Activated naive CD8-positive, alpha-beta T cell treated with anti-CD3 and anti-CD28 coated beads, Interleukin-2, amount 10 ng/mL, durations not matched to agents 7 days and 5 days (primary cell): ENCODE measurements at regions of chr5 and their contacts with region 1.

Region 1: DNA sequence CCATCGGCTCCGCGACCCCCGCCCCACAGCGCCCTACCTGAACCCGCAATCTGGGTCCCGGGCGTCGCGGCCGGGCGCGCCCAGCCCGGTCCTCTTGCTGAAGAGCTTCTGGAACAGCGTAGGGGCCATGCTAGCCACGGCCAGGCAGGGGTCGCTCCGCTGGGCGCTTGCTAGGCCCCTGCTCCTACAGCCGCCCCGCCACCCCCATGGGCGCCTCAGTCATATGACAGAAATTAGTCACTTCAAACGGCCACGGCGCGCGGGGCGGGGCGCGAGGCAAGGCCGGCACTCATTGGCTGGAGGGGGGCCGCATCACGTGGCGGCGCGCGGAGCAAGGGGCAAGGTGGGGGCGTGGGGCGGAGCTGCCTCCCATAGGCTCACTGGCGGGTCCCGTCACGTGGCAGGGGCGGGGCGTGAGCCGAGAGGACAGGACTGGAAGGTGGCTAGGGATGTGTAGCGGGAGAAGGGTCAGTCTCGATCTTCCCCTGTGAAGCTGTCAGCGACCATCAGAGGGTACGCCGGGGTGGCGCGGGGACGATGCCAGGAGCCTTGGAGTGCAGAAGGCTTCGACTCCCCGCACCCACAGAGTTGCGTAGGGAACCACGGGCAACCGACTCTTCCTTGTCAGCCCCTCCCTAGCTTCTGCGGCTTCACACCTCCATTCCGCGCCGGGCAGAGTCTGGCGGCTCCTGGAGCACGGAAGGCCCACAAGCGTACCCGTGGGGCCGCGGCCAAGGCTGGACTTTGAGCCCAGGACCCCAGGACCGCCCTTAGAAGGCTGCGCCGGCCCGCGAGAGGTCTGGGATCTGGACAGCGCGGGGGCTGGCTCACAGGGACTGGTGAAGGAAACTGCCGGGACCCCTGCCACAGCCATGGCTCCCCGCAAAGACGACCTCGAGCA is at the start of gene FNIP1:
- DNase-seq: peak; percentile 99
- ATAC-seq: peak; percentile 94
- H3K4me3 Mint-ChIP-seq: peak within 1 kb of the TSS; percentile 97
- H3K27ac Mint-ChIP-seq: peak within 1 kb of the TSS; percentile 94
- H3K4me1 Mint-ChIP-seq: peaks cover 25% of the 10 kb centered on the region
- H3K27me3 Mint-ChIP-seq: no peaks in the 10 kb centered on the region
- total RNA-seq, gene FNIP1: 30.6 to 31.7 TPM

Region 2: GRCh38 chr5:131634996-131635754 is 161.9 kb before region 1 on chr5 and contains the start of gene RAPGEF6:
- POLR2A ChIA-PET with region 1: interaction called, 14 read pairs
- DNase-seq: peak; percentile 92
- ATAC-seq: peak; percentile 91
- H3K4me3 Mint-ChIP-seq: peak within 1 kb of the TSS; percentile 96
- H3K27ac Mint-ChIP-seq: peak within 1 kb of the TSS; percentile 94
- H3K4me1 Mint-ChIP-seq: peaks cover 18% of the 10 kb centered on the region
- H3K27me3 Mint-ChIP-seq: no peaks in the 10 kb centered on the region
- total RNA-seq, gene RAPGEF6: 51.2 to 51.5 TPM

Region 3: GRCh38 chr5:131747180-131748105 is 49.6 kb before region 1 on chr5:
- POLR2A ChIA-PET with region 1: interaction called, 13 read pairs
- DNase-seq: no peak
- ATAC-seq: peak; percentile 89
- H3K4me3 Mint-ChIP-seq: peak overlapping the region; percentile 66
- H3K27ac Mint-ChIP-seq: peak overlapping the region; percentile 96
- H3K4me1 Mint-ChIP-seq: peaks cover 29% of the 10 kb centered on the region
- H3K27me3 Mint-ChIP-seq: no peaks in the 10 kb centered on the region